Endothelial cell of umbilical vein (primary cell): ENCODE measurements at regions of chr19 and their contacts with region 1.

Region 1: GRCh38 chr19:54463531-54464043 is at the start of gene LENG9:
- DNase-seq: peak; percentile 98
- H3K4me3 ChIP-seq: peak within 1 kb of the TSS; percentile 28 to 46 (median 38)
- H3K27ac ChIP-seq: peak within 1 kb of the TSS; percentile 85
- H3K4me1 ChIP-seq: peaks cover 29% of the 10 kb centered on the region
- H3K27me3 ChIP-seq: no peaks in the 10 kb centered on the region
- CTCF ChIP-seq: no peak
- POLR2A ChIP-seq: peak; percentile 95
- total RNA-seq, gene LENG9: 2.8 and 3.2 TPM in 2 replicates

Region 2: GRCh38 chr19:54137086-54137921 is 326.3 kb before region 1 on chr19 and contains the start of gene CNOT3:
- CTCF ChIA-PET with region 1: no interaction called
- POLR2A ChIA-PET with region 1: no interaction called
- dilution Hi-C with region 1: no loop called
- intact Hi-C with region 1: no loop called
- DNase-seq: peak; percentile 100
- H3K4me3 ChIP-seq: peak within 1 kb of the TSS; percentile 66 to 98 (median 69)
- H3K27ac ChIP-seq: peak within 1 kb of the TSS; percentile 71
- H3K4me1 ChIP-seq: peaks cover 17% of the 10 kb centered on the region
- H3K27me3 ChIP-seq: no peaks in the 10 kb centered on the region
- CTCF ChIP-seq: no peak
- POLR2A ChIP-seq: peak; percentile 72
- total RNA-seq, gene CNOT3: 62.4 and 74.7 TPM in 2 replicates

Region 3: DNA sequence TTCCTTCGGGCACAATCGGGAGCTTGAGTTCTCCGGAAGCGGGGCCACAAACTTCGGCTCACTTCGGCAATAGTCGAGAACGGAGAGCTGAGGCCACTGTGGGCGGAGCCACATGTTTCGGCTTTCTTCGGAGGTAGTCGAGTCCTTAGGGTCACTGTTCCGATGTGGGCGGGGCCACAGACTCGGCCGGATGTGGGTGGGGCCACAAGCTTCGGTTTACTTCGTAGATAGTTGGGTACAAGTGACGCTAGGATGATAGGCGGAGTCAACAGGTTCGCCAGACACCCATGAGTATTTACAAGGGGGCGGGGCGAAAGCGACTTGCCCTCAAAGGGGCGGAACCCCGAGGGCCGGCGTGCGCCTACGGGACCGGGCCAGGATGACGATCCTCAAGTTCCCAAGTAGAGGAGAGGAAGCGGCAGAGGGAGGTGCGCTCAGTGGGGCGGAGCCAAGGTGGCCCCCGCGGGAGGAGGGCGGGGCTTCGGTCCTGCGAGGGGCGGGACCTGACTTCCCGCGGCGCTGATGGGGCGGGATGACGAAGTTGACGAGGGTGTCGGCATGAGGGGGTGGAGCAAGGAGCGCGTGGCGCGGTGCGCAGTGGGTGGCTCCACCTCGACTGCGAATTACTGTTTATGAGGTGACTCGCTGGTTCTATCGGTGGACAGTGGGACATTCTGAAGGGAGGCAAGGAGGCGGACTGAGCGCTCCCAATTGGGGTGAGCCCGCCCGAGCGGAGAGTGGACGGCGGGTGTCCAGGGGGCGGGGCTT is 273.7 kb before region 1 on chr19:
- CTCF ChIA-PET with region 1: no interaction called
- POLR2A ChIA-PET with region 1: no interaction called
- dilution Hi-C with region 1: no loop called
- intact Hi-C with region 1: loop called (anchors 2 kb)
- DNase-seq: peak; percentile 100
- H3K4me3 ChIP-seq: peak overlapping the region in 2 of 3 experiments; percentile 72 to 87
- H3K27ac ChIP-seq: peak overlapping the region; percentile 86
- H3K4me1 ChIP-seq: peaks cover 16% of the 10 kb centered on the region
- H3K27me3 ChIP-seq: no peaks in the 10 kb centered on the region
- CTCF ChIP-seq: no peak
- POLR2A ChIP-seq: peak; percentile 47

Region 4: DNA sequence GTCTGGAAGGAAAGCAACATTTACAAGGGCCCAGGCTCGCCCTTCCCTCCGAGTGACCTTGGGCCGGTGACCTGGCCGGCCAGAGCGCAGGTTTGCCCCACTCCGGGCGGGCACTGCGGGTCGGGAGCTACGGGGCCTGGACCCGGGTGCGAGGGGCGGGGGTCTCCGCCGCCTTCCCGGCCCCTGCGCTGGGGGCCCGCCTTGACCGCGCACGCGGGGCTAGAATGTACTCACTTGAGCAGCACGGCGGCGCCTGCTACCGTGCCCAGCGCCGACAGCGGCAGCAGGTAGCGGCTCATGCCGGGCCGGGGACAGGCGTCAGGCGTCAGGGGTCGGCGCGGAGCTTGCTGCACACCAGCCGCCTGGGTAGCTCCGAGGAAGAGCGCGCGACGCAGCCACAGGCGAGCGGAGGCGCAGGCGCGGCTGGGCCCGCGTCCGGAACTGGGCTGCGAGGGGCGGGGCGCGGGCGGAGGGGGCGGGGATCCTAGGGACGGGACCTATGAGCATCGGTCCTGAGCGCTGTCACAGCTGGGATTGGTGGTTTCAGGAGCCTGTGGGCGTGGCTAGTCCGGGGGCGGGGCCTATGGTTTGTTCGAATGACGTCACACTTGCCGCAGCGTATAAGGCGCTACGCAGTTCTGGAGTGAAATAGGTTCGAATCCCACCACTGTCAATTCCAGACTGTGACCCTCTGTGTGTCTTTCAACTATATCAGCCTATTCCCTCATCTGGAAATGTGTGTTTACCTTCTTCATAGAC is 599.3 kb after region 1 on chr19 and contains the start of gene RDH13:
- CTCF ChIA-PET with region 1: no interaction called
- POLR2A ChIA-PET with region 1: no interaction called
- dilution Hi-C with region 1: no loop called
- intact Hi-C with region 1: loop called (anchors 5 kb)
- DNase-seq: peak; percentile 96
- H3K4me3 ChIP-seq: peak within 1 kb of the TSS; percentile 53 to 84 (median 55)
- H3K27ac ChIP-seq: peak within 1 kb of the TSS; percentile 38
- H3K4me1 ChIP-seq: peaks cover 8% of the 10 kb centered on the region
- H3K27me3 ChIP-seq: peaks cover 12 to 13% of the 10 kb centered on the region in 2 experiments
- CTCF ChIP-seq: no peak
- POLR2A ChIP-seq: no peak
- total RNA-seq, gene RDH13: 14.0 and 19.6 TPM in 2 replicates

Region 5: GRCh38 chr19:55117636-55118391 is 654.2 kb after region 1 on chr19 and contains the start of gene PPP1R12C:
- CTCF ChIA-PET with region 1: no interaction called
- POLR2A ChIA-PET with region 1: no interaction called
- dilution Hi-C with region 1: no loop called
- intact Hi-C with region 1: loop called (anchors 5 kb)
- DNase-seq: peak; percentile 98
- H3K4me3 ChIP-seq: peak within 1 kb of the TSS; percentile 30 to 92 (median 75)
- H3K27ac ChIP-seq: peak within 1 kb of the TSS; percentile 59
- H3K4me1 ChIP-seq: peaks cover 20% of the 10 kb centered on the region
- H3K27me3 ChIP-seq: no peaks in the 10 kb centered on the region
- CTCF ChIP-seq: no peak
- POLR2A ChIP-seq: peak; percentile 79
- total RNA-seq, gene PPP1R12C: 137 and 149 TPM in 2 replicates